Calu3 (cell line): ENCODE measurements at regions of chr19 and their contacts with region 1.

Region 1: DNA sequence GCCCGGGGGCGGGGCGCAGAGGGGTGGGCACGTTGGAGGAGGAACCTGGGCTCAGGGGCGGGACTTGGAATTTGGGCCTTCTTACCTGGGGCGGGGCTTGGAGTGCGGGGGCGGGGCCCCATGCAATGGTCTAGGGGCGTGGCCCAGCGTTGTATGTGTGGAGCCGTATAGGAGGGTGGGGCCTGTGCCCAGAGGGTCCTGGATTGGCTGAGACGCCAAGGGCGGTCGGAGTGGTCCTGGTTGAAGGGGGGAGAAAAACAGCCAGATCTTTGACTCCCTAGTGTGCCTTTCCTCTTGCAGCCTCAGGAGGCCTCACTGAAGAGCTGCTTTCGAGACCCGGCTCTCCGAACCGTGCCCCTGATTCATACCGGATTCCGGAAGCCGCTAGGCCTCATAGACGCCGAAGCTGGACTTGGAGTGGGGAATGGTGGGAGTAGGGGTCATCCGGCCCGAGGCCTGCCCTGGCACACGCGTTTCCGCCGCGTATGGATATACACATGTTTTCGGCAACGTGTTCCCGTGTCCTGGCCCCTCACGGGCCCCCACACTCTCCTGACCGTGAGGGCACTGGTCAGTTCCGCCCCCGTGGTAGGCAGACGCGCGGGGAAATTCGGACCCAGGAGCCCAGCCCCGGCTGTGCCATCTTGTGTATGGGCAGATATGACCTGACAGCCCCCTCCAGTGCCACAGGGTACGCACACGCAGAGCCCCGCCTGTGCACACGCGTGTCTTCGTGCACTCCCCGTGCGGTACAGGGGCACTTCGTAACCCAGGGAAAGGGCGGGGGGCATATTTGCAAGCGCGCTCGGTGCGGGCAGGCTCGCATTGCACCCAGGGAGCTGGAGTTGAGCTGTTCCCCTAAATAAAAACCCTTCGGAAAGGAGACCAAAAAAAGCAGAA is 661 bp upstream of the PRR12 start:
- DNase-seq: peak; percentile 99
- H3K4me3 Mint-ChIP-seq: peak overlapping the region; percentile 88
- H3K27ac Mint-ChIP-seq: peak overlapping the region; percentile 88
- H3K4me1 Mint-ChIP-seq: peaks cover 36% of the 10 kb centered on the region
- H3K27me3 Mint-ChIP-seq: no peaks in the 10 kb centered on the region
- CTCF ChIP-seq: no peak

Region 2: GRCh38 chr19:49318296-49318695 is 272.0 kb before region 1 on chr19:
- CTCF ChIA-PET with region 1: interaction called, 10 read pairs
- intact Hi-C with region 1: no loop called
- DNase-seq: no peak
- H3K4me3 Mint-ChIP-seq: no peak overlapping the region
- H3K27ac Mint-ChIP-seq: no peak overlapping the region
- H3K4me1 Mint-ChIP-seq: no peaks in the 10 kb centered on the region
- H3K27me3 Mint-ChIP-seq: peaks cover 29% of the 10 kb centered on the region
- CTCF ChIP-seq: no peak

Region 3: DNA sequence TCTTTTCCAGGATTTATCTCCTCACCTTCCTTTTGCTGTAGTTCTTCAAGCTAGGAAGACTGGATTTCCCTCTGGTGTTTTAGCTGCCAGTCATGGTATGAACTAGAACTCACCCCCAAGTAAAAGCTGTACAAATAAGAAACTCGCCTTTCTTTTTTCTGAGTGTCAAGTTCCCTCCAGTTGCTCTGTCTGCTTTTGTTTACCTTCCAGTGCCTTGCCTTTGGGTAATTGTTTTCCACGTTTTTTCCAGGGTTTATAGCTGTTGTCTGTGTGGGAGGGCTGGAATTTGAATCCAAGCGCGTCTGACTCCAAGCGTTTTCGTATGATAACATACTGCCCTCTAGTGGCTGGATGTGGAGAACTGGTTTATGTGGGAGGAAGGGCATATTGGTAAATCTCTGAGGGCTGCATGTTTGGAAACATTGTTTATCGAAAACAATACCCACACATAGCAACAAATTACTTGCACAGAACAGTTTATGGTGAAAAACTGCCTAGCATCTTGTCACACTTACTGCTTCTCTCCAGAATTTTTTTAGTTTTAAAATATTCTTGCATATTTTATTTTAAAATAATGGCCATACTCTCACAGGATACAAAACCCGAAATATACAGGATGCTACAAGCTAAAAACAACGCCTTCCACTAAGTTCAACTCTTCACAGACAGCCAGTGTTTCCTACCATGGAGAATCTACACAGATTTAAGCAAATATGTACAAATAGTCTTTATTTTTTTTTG is 43.3 kb before region 1 on chr19:
- CTCF ChIA-PET with region 1: no interaction called
- intact Hi-C with region 1: no loop called
- DNase-seq: peak; percentile 80
- H3K4me3 Mint-ChIP-seq: peak overlapping the region; percentile 29
- H3K27ac Mint-ChIP-seq: peak overlapping the region; percentile 13
- H3K4me1 Mint-ChIP-seq: no peaks in the 10 kb centered on the region
- H3K27me3 Mint-ChIP-seq: peaks cover 17% of the 10 kb centered on the region
- CTCF ChIP-seq: peak; percentile 87